ENCODE measurements at regions of chr11 and their contacts with region 1.

Region 1: DNA sequence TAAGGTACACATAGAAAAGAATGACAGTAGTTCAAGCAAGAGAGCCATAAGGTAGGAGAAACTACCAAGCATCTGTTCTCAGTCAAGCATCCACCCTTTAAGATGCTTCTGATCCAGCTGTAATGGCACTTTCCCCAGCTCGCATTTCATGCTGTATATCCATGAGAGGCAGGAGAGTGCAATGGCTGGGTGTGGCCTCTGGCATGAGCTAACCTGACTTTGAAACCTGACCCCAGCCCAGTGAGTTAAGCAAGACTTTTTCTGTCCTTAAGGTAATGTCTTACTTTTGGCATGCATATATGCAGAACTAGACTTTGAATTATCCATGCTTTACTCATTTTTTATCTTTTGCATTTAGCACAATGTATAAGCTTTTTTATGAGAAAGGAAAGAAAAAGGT is 79.8 kb upstream of the CNTN5 start:
- DNase-seq: no peak
- H3K4me3 ChIP-seq: no peak overlapping the region
- H3K27ac ChIP-seq: no peak overlapping the region
- H3K4me1 ChIP-seq: no peaks in the 10 kb centered on the region
- H3K27me3 ChIP-seq: no peaks in the 10 kb centered on the region
- CTCF ChIP-seq: no peak
- EP300 ChIP-seq: no peak
- POLR2A ChIP-seq: no peak

Region 2: GRCh38 chr11:97832451-97832850 is 1108.5 kb before region 1 on chr11:
- in situ Hi-C with region 1: no loop called
- intact Hi-C with region 1: loop called (anchors 5 kb)
- DNase-seq: no peak
- H3K4me3 ChIP-seq: no peak overlapping the region
- H3K27ac ChIP-seq: no peak overlapping the region
- H3K4me1 ChIP-seq: no peaks in the 10 kb centered on the region
- H3K27me3 ChIP-seq: no peaks in the 10 kb centered on the region
- CTCF ChIP-seq: no peak
- EP300 ChIP-seq: no peak
- POLR2A ChIP-seq: no peak

Region 3: GRCh38 chr11:98625526-98625925 is 315.4 kb before region 1 on chr11:
- in situ Hi-C with region 1: no loop called
- intact Hi-C with region 1: no loop called
- DNase-seq: no peak
- H3K4me3 ChIP-seq: no peak overlapping the region
- H3K27ac ChIP-seq: no peak overlapping the region
- H3K4me1 ChIP-seq: no peaks in the 10 kb centered on the region
- H3K27me3 ChIP-seq: no peaks in the 10 kb centered on the region
- CTCF ChIP-seq: no peak
- EP300 ChIP-seq: no peak
- POLR2A ChIP-seq: no peak

Region 4: GRCh38 chr11:99015634-99016454 is 74.9 kb after region 1 on chr11:
- in situ Hi-C with region 1: no loop called
- intact Hi-C with region 1: no loop called
- DNase-seq: no peak
- H3K4me3 ChIP-seq: no peak overlapping the region
- H3K27ac ChIP-seq: no peak overlapping the region
- H3K4me1 ChIP-seq: peaks cover 0 to 8% (median under 1%) of the 10 kb centered on the region in 4 donors
- H3K27me3 ChIP-seq: peaks cover 27% of the 10 kb centered on the region
- CTCF ChIP-seq: peak; percentile 60 to 89 (median 78)
- EP300 ChIP-seq: no peak
- POLR2A ChIP-seq: no peak

Region 5: GRCh38 chr11:99238401-99238800 is 297.5 kb after region 1 on chr11:
- in situ Hi-C with region 1: no loop called
- intact Hi-C with region 1: no loop called
- DNase-seq: no peak
- H3K4me3 ChIP-seq: no peak overlapping the region
- H3K27ac ChIP-seq: no peak overlapping the region
- H3K4me1 ChIP-seq: no peaks in the 10 kb centered on the region
- H3K27me3 ChIP-seq: no peaks in the 10 kb centered on the region
- CTCF ChIP-seq: no peak
- EP300 ChIP-seq: no peak
- POLR2A ChIP-seq: no peak

Measured in transverse colon (tissue), 4 donors.